ENCODE measurements at regions of chr17 and their contacts with region 1.

Region 1: DNA sequence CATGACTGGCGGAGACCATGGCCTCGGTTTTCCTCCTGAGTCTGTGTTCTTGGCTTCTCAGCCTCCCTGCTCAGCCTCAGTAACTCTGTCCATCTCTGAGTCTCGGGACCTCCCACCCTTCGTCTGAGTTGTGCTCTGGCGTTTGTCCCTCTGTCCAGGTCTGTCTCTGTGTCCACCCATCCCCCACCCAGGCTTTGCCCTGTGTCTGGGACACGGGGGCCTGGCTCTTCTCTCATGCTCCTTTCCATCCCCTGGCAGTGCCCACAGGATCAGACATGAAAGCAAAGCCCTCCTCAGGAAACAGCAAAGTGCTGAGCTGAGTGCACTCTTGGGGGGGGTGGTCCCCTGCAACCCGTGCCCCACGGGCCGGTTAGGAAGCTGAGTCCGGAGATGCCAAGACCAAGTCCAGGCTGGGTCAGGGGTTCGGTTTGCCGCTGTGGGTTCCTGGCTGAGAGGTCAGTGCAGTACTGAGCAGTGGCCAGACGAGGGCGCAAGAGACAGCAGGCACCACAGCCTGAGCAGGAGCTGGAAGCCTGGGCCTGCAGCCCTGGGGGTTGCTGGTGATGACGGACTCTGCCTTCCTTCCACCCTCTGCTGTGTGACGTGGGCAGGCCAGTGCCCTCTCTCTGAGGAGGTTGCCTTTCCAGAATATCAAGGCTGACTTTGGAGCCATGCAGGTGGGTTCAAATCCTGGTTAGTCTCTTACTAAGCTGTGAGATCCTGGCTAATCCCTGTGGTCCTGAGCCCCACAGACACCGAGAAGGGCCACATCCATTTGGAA is 2.5 kb downstream of the P2RX1 start:
- DNase-seq: peak; percentile 92
- ATAC-seq: peak; percentile 71
- H3K4me3 Mint-ChIP-seq: no peak overlapping the region
- H3K27ac Mint-ChIP-seq: peak overlapping the region; percentile 42
- H3K4me1 Mint-ChIP-seq: peaks cover 52% of the 10 kb centered on the region
- H3K27me3 Mint-ChIP-seq: no peaks in the 10 kb centered on the region

Region 2: GRCh38 chr17:3859940-3860339 is 53.8 kb before region 1 on chr17:
- CTCF ChIA-PET with region 1: interaction called, 5 read pairs
- POLR2A ChIA-PET with region 1: no interaction called
- intact Hi-C with region 1: loop called (anchors 5 kb)
- DNase-seq: no peak
- ATAC-seq: no peak
- H3K4me3 Mint-ChIP-seq: no peak overlapping the region
- H3K27ac Mint-ChIP-seq: no peak overlapping the region
- H3K4me1 Mint-ChIP-seq: no peaks in the 10 kb centered on the region
- H3K27me3 Mint-ChIP-seq: no peaks in the 10 kb centered on the region

Region 3: GRCh38 chr17:3893003-3893719 is 20.6 kb before region 1 on chr17 and contains the start of gene CAMKK1:
- CTCF ChIA-PET with region 1: interaction called, 16 read pairs
- POLR2A ChIA-PET with region 1: no interaction called
- intact Hi-C with region 1: loop called in 1 of 2 experiments (anchors 1 kb)
- DNase-seq: peak; percentile 94
- ATAC-seq: peak; percentile 88
- H3K4me3 Mint-ChIP-seq: peak within 1 kb of the TSS; percentile 76
- H3K27ac Mint-ChIP-seq: peak within 1 kb of the TSS; percentile 77
- H3K4me1 Mint-ChIP-seq: peaks cover 36% of the 10 kb centered on the region
- H3K27me3 Mint-ChIP-seq: no peaks in the 10 kb centered on the region
- total RNA-seq, gene CAMKK1: 4.5 to 5.4 TPM

Region 4: DNA sequence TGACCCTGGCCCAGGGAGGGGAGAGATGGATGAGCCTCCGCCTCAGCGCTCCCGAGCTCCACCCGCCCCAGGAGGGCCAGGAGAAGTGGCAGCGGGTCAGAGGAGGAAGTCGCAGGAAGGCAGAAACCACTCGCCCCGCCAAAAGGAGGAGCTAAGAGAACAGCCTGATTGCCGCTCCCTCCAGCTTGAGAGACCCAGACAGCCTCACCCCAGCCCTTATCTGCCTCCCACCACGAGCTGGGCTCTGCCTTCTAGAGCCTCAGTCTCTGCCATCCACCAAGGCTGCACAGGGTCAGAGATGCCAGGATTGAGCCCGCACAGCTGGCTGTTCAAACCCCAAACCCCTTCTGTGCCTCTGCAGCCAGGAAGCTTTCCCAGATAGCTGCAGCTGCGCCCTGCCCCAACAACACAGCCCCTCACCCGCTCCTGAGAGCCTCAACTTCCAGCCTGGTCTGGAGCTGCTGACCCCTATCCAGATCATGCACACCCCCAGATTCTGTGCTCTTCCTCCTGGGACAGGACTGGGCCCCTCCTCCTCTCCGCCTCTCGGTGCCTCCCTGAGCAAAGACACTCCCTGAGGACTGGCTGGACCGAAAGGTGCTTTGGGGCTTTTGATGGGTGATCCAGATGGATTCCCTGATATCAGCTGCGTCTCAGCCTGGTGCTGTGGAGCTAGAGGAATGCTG is 51.5 kb after region 1 on chr17:
- CTCF ChIA-PET with region 1: interaction called, 17 read pairs
- POLR2A ChIA-PET with region 1: no interaction called
- intact Hi-C with region 1: loop called (anchors 1 to 5 kb)
- DNase-seq: peak; percentile 86
- ATAC-seq: peak; percentile 75
- H3K4me3 Mint-ChIP-seq: peak overlapping the region; percentile 81
- H3K27ac Mint-ChIP-seq: peak overlapping the region; percentile 93
- H3K4me1 Mint-ChIP-seq: peaks cover 40% of the 10 kb centered on the region
- H3K27me3 Mint-ChIP-seq: no peaks in the 10 kb centered on the region

Region 5: GRCh38 chr17:4004517-4005295 is 91.0 kb after region 1 on chr17:
- CTCF ChIA-PET with region 1: interaction called, 61 read pairs
- POLR2A ChIA-PET with region 1: no interaction called
- intact Hi-C with region 1: loop called (anchors 1 to 2 kb)
- DNase-seq: peak; percentile 80
- ATAC-seq: peak; percentile 91
- H3K4me3 Mint-ChIP-seq: no peak overlapping the region
- H3K27ac Mint-ChIP-seq: no peak overlapping the region
- H3K4me1 Mint-ChIP-seq: peaks cover 6% of the 10 kb centered on the region
- H3K27me3 Mint-ChIP-seq: no peaks in the 10 kb centered on the region

Region 6: GRCh38 chr17:4074831-4075495 is 161.2 kb after region 1 on chr17:
- CTCF ChIA-PET with region 1: interaction called, 9 read pairs
- POLR2A ChIA-PET with region 1: no interaction called
- intact Hi-C with region 1: loop called (anchors 2 kb)
- DNase-seq: peak; percentile 9
- ATAC-seq: peak; percentile 66
- H3K4me3 Mint-ChIP-seq: no peak overlapping the region
- H3K27ac Mint-ChIP-seq: peak overlapping the region; percentile 38
- H3K4me1 Mint-ChIP-seq: no peaks in the 10 kb centered on the region
- H3K27me3 Mint-ChIP-seq: no peaks in the 10 kb centered on the region

Region 7: GRCh38 chr17:4263282-4264215 is 349.8 kb after region 1 on chr17 and contains the start of gene ANKFY1:
- CTCF ChIA-PET with region 1: no interaction called
- POLR2A ChIA-PET with region 1: no interaction called
- intact Hi-C with region 1: loop called in 1 of 2 experiments (anchors 5 kb)
- DNase-seq: peak; percentile 99
- ATAC-seq: peak; percentile 99
- H3K4me3 Mint-ChIP-seq: peak within 1 kb of the TSS; percentile 97
- H3K27ac Mint-ChIP-seq: peak within 1 kb of the TSS; percentile 96
- H3K4me1 Mint-ChIP-seq: peaks cover 35% of the 10 kb centered on the region
- H3K27me3 Mint-ChIP-seq: no peaks in the 10 kb centered on the region
- total RNA-seq, gene ANKFY1: 39.8 to 40.7 TPM

Measured in activated CD4-positive, alpha-beta T cell treated with anti-CD3 and anti-CD28 coated beads for 36 hours (primary cell).